ENCODE measurements at regions of chr11 and their contacts with region 1.

Region 1: GRCh38 chr11:61792310-61793085 is at the starts of genes FEN1 and TMEM258:
- DNase-seq: peak; percentile 92 to 95 (median 93)
- H3K4me3 ChIP-seq: peak within 1 kb of the TSS; percentile 48 to 94 (median 84)
- H3K27ac ChIP-seq: peak within 1 kb of the TSS; percentile 99
- H3K4me1 ChIP-seq: peaks cover 11 to 29% (median 25%) of the 10 kb centered on the region in 4 experiments
- H3K27me3 ChIP-seq: no peaks in the 10 kb centered on the region

Region 2: GRCh38 chr11:61581030-61581928 is 211.2 kb before region 1 on chr11 and contains the start of gene SYT7:
- CTCF ChIA-PET with region 1: no interaction called
- POLR2A ChIA-PET with region 1: no interaction called
- DNase-seq: peak; percentile 96 to 98 (median 98)
- H3K4me3 ChIP-seq: peak within 1 kb of the TSS in 6 of 7 experiments; percentile 38 to 74 (median 62)
- H3K27ac ChIP-seq: no peak within 1 kb of the TSS
- H3K4me1 ChIP-seq: peaks cover 0 to 15% (median 5%) of the 10 kb centered on the region in 4 experiments
- H3K27me3 ChIP-seq: peaks cover 0 to 72% (median 32%) of the 10 kb centered on the region in 5 experiments

Region 3: DNA sequence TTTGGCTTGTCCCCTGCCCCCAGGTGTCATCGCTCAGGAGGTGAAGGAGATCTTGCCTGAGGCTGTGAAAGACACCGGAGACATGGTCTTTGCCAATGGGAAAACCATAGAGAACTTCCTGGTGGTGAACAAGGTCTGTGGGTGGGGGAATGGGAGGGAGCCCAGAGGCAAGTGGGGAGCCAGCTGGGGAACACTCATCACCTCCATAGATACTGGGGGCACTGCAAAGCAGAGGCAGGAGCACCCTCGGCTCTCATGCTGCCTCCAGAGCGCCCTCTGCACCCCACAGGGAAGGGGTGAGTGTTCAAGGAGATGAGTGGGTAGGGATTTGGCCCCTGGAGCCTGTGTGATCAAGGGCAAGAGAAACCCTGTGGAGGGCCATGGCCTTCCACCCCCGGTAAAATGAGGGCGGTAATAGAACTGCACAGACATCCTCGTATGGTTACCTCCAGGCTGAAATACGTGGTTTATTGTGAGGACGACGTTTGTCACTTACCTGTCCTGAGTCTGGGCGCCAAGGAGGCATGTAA is 14.1 kb before region 1 on chr11:
- CTCF ChIA-PET with region 1: interaction called, 11 read pairs
- POLR2A ChIA-PET with region 1: no interaction called
- DNase-seq: no peak
- H3K4me3 ChIP-seq: no peak overlapping the region
- H3K27ac ChIP-seq: no peak overlapping the region
- H3K4me1 ChIP-seq: peaks cover 0 to 13% (median 10%) of the 10 kb centered on the region in 4 experiments
- H3K27me3 ChIP-seq: peaks cover 0 to 9% (median 0%) of the 10 kb centered on the region in 5 experiments

Region 4: GRCh38 chr11:61816736-61817455 is 24.4 kb after region 1 on chr11 and contains the start of gene FADS1:
- CTCF ChIA-PET with region 1: interaction called, 218 read pairs
- POLR2A ChIA-PET with region 1: interaction called, 3 read pairs
- DNase-seq: peak; percentile 97 to 98 (median 98)
- H3K4me3 ChIP-seq: peak within 1 kb of the TSS; percentile 79 to 97 (median 93)
- H3K27ac ChIP-seq: peak within 1 kb of the TSS; percentile 61 to 91
- H3K4me1 ChIP-seq: peaks cover 3 to 31% (median 25%) of the 10 kb centered on the region in 4 experiments
- H3K27me3 ChIP-seq: no peaks in the 10 kb centered on the region

Region 5: DNA sequence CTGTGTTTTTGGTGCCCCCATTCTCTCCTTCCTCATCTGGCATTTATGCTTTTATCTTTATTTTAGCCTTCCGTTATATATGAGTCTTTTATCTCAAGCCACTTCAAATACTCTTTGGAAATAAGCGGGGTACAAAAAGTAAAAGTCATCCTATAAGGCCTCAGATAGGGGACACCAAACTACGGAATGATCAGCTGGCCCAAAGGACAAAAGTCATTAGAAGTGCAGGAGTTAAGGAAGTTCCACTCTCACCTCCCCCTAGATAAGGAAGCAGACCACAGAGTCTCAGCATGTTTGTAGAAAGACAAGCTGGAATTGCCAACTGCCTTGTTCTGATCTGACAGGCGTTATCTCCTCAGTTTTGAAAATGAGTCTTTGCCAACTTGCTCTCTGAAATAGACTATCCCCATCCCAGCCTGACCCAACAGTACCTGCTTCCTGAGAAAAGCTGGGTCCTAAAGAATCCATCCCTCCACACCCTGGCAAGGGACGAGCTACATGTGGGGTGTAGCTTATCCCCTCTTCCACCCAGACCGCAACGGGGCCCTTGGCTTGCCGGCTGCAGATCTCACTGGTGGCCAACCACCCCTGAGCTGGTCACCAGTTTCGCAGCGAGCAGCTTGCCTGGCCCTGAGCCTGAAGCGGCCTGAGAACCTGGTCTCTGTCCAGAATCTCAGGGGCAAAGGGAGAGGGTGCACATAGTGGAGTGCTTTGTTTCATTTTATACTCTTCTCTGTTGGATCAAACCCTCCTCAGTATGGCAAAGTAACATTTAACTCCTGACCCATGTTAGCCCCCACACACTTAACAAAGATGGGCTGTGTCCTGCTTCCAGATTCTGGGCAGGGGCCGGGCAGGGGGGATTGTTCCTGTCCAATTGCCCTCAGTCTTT is 49.4 kb after region 1 on chr11:
- CTCF ChIA-PET with region 1: interaction called, 13 read pairs
- POLR2A ChIA-PET with region 1: no interaction called
- DNase-seq: peak; percentile 7 to 37 (median 14)
- H3K4me3 ChIP-seq: no peak overlapping the region
- H3K27ac ChIP-seq: peak overlapping the region; percentile 13 to 69
- H3K4me1 ChIP-seq: peaks cover 0 to 3% (median 0%) of the 10 kb centered on the region in 4 experiments
- H3K27me3 ChIP-seq: no peaks in the 10 kb centered on the region

Region 6: DNA sequence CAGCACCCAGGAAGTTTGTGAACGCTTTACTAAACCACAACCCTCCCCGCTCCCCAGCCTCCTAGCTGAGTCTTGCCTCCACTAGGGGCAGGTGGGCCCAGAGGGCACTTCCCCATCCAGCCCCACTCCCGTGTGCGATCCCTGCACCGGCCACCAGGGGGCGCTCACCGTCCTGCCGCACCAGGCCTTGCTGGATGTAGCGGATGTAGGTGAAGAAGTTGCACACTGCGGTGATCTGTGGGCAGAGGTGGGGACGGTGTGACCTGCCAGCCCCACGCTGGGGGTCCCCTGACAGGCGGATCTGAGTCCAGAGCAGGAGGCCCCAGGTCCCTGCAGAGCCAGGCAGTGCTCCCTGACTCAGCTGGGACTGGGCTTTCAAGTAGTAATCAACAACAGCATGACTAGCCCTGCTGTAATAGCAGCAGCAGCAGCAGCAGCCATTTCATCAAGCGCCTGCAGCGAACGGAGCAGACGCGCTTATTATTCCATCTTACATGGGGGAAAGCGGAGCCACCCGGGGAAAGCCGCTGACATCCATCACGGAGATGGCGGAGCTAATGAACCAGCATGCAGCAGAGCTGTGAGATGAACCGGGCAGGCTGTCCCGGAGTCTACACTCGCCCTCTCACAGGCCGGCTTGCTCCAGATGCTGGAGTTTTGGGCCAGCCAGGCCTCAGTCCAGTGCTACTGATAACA is 106.8 kb after region 1 on chr11:
- CTCF ChIA-PET with region 1: interaction called, 52 read pairs
- POLR2A ChIA-PET with region 1: no interaction called
- DNase-seq: peak; percentile 87 to 94 (median 92)
- H3K4me3 ChIP-seq: no peak overlapping the region
- H3K27ac ChIP-seq: no peak overlapping the region
- H3K4me1 ChIP-seq: peaks cover 0 to 7% (median 2%) of the 10 kb centered on the region in 4 experiments
- H3K27me3 ChIP-seq: peaks cover 0 to 2% (median 0%) of the 10 kb centered on the region in 5 experiments

Region 7: DNA sequence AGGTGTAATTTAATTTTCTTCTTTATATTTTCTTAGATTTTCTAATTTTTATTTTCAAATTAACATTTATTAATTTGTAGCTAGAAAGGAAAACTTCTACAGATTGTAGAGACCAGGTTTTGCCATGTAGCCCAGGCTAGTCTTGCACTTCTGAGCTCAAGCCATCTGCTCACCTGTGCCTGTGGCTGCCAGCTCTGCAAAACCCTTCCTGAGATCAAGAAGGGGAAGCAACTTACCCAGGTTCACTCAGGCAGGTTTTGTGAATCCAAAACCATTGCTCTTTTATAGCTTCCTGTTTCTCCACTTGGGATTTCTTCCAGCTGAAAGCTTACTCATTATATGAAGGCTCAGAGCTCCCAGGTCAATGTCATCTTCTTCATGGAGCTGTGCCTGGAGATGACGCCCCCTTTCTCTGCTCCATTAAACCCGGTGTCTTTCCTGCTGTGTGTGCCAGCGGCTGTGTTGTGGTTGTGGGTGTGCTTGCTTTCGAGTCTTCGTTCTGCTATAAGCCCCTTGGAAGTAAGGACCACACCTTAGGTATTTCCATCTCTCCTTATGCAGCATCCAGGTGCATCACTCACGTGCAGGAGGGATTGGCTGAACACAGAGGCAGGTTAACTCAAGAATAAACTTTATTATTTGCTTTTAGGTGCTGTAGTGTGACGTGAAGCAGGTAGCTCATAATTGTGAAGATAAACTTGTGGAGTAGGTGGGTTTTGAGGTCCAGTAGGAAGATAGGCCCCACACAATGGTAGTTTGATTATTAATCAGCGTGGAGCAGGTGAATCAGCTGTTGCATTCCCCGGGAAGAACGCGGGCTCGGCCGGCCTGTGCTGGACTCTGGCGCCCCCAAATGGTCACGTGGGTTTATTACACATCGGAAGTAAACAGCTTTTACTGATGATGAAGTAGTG is 289.1 kb after region 1 on chr11:
- CTCF ChIA-PET with region 1: interaction called, 24 read pairs
- POLR2A ChIA-PET with region 1: no interaction called
- DNase-seq: peak; percentile 67 to 75 (median 73)
- H3K4me3 ChIP-seq: peak overlapping the region in 3 of 7 experiments; percentile 41 to 70 (median 43)
- H3K27ac ChIP-seq: no peak overlapping the region
- H3K4me1 ChIP-seq: peaks cover 0 to 7% (median 5%) of the 10 kb centered on the region in 4 experiments
- H3K27me3 ChIP-seq: no peaks in the 10 kb centered on the region

Measured in common myeloid progenitor, CD34-positive (primary cell).